ENCODE measurements at regions of chr15 and their contacts with region 1.

Region 1: GRCh38 chr15:45634442-45635190 is at the start of gene SQOR:
- DNase-seq: peak; percentile 42 to 84 (median 58)
- ATAC-seq: peak; percentile 57
- H3K4me3 ChIP-seq: peak within 1 kb of the TSS; percentile 98
- H3K4me3 Mint-ChIP-seq: peak within 1 kb of the TSS; percentile 96
- H3K27ac ChIP-seq: peak within 1 kb of the TSS; percentile 59 to 73
- H3K27ac Mint-ChIP-seq: peak within 1 kb of the TSS; percentile 81
- H3K4me1 ChIP-seq: peaks cover 51% of the 10 kb centered on the region
- H3K4me1 Mint-ChIP-seq: peaks cover 49% of the 10 kb centered on the region
- H3K27me3 ChIP-seq: no peaks in the 10 kb centered on the region
- H3K27me3 Mint-ChIP-seq: no peaks in the 10 kb centered on the region
- CTCF ChIP-seq: no peak
- total RNA-seq, gene SQOR: 14.0 to 16.9 TPM

Region 2: GRCh38 chr15:45587095-45587860 is 47.3 kb before region 1 on chr15 and contains the start of gene BLOC1S6:
- CTCF ChIA-PET with region 1: interaction called, 3 read pairs
- POLR2A ChIA-PET with region 1: interaction called, 30 read pairs
- intact Hi-C with region 1: loop called (anchors 2 kb)
- DNase-seq: peak; percentile 78 to 95 (median 85)
- ATAC-seq: peak; percentile 78
- H3K4me3 ChIP-seq: peak within 1 kb of the TSS; percentile 94
- H3K4me3 Mint-ChIP-seq: peak within 1 kb of the TSS; percentile 99
- H3K27ac ChIP-seq: peak within 1 kb of the TSS; percentile 95 to 99
- H3K27ac Mint-ChIP-seq: peak within 1 kb of the TSS; percentile 100
- H3K4me1 ChIP-seq: peaks cover 21% of the 10 kb centered on the region
- H3K4me1 Mint-ChIP-seq: peaks cover 43% of the 10 kb centered on the region
- H3K27me3 ChIP-seq: no peaks in the 10 kb centered on the region
- H3K27me3 Mint-ChIP-seq: no peaks in the 10 kb centered on the region
- CTCF ChIP-seq: no peak
- total RNA-seq, gene BLOC1S6: 68.5 TPM

Region 3: GRCh38 chr15:45705510-45706473 is 71.2 kb after region 1 on chr15:
- CTCF ChIA-PET with region 1: interaction called, 5 read pairs
- POLR2A ChIA-PET with region 1: interaction called, 4 read pairs
- intact Hi-C with region 1: loop called (anchors 2 to 5 kb)
- DNase-seq: peak; percentile 40 to 87 (median 58)
- ATAC-seq: peak; percentile 81
- H3K4me3 ChIP-seq: peak overlapping the region; percentile 68
- H3K4me3 Mint-ChIP-seq: peak overlapping the region; percentile 95
- H3K27ac ChIP-seq: no peak overlapping the region
- H3K27ac Mint-ChIP-seq: peak overlapping the region; percentile 65
- H3K4me1 ChIP-seq: peaks cover 13% of the 10 kb centered on the region
- H3K4me1 Mint-ChIP-seq: peaks cover 11% of the 10 kb centered on the region
- H3K27me3 ChIP-seq: peaks cover 3 to 5% of the 10 kb centered on the region in 2 experiments
- H3K27me3 Mint-ChIP-seq: no peaks in the 10 kb centered on the region
- CTCF ChIP-seq: peak; percentile 99